PC-9 (cell line): ENCODE measurements at regions of chr2 and their contacts with region 1.

Region 1: GRCh38 chr2:215619022-215619958 is 183.4 kb upstream of the FN1 start:
- DNase-seq: peak; percentile 74 to 95
- H3K4me3 ChIP-seq: peak overlapping the region; percentile 31; the same call in 1 of the 2 replicates
- H3K27ac ChIP-seq: peak overlapping the region; percentile 59
- H3K4me1 ChIP-seq: peaks cover 37% of the 10 kb centered on the region
- H3K27me3 ChIP-seq: no peaks in the 10 kb centered on the region
- CTCF ChIP-seq: no peak

Region 2: GRCh38 chr2:214244847-214245246 is 1374.4 kb before region 1 on chr2:
- CTCF ChIA-PET with region 1: no interaction called
- POLR2A ChIA-PET with region 1: no interaction called
- intact Hi-C with region 1: no loop called
- DNase-seq: no peak
- H3K4me3 ChIP-seq: no peak overlapping the region
- H3K27ac ChIP-seq: no peak overlapping the region
- H3K4me1 ChIP-seq: no peaks in the 10 kb centered on the region
- H3K27me3 ChIP-seq: no peaks in the 10 kb centered on the region
- CTCF ChIP-seq: no peak

Region 3: DNA sequence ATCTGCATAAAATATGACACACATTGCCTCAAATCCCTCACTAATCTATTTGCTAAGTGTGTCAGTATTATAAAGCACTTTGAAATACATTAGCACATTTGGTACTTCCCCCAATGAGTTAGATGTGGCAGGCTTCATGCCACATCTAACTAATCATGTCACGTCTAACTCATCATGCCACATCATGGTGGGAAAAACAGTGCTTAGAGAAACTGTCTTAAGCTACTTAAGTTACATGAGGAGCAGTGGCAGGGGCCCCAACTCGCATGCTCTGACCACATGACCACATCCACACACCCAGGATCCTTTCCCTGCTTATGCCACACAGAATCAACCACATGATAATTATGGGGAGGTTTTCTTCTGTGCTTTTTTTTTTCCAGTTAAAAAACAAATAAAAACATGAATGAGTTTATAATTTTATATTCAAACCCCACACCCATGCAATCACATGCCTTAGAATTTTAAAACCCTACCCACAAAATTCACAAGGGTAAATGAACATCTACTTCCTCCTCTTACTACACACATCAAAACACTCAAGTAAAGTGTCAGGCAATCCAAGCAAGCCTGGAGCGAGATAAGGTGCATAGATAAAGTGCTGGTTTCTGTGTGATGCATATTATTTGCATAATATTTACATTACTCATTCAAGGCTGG is 482.5 kb before region 1 on chr2:
- CTCF ChIA-PET with region 1: no interaction called
- POLR2A ChIA-PET with region 1: no interaction called
- intact Hi-C with region 1: no loop called
- DNase-seq: peak in 1 of 2 experiments; percentile 88
- H3K4me3 ChIP-seq: peak overlapping the region; percentile 2; the same call in 1 of the 2 replicates
- H3K27ac ChIP-seq: peak overlapping the region; percentile 81
- H3K4me1 ChIP-seq: peaks cover 30% of the 10 kb centered on the region
- H3K27me3 ChIP-seq: no peaks in the 10 kb centered on the region
- CTCF ChIP-seq: no peak

Region 4: GRCh38 chr2:215435809-215436704 is 183.2 kb before region 1 on chr2 and contains the start of gene FN1:
- CTCF ChIA-PET with region 1: no interaction called
- POLR2A ChIA-PET with region 1: no interaction called
- intact Hi-C with region 1: loop called (anchors 1 kb)
- DNase-seq: peak in 1 of 2 experiments; percentile 74
- H3K4me3 ChIP-seq: peak within 1 kb of the TSS; percentile 70
- H3K27ac ChIP-seq: no peak within 1 kb of the TSS
- H3K4me1 ChIP-seq: peaks cover 15% of the 10 kb centered on the region
- H3K27me3 ChIP-seq: no peaks in the 10 kb centered on the region
- CTCF ChIP-seq: no peak
- total RNA-seq, gene FN1: 39.4 and 42.5 TPM in 2 replicates

Region 5: DNA sequence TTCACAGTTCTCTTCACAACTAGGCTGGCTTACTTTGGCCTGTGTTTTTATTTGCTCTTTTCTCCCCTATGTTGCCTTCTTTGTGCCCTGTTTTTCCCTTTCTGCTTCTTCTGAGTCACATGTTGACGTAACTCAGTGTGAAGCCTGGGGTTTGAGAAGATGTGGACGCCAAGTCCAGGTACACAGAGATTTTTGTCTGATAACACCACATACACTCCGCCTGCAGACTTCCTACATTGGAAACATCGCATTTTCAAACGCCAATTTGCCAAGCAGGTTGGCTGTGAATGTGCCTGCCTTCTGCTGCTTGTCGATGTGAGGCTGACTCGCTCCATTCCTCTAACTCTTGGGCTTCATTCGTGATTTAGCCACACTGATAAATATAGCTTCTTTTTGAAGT is 120.9 kb before region 1 on chr2:
- CTCF ChIA-PET with region 1: no interaction called
- POLR2A ChIA-PET with region 1: interaction called, 6 read pairs
- intact Hi-C with region 1: loop called (anchors 2 kb)
- DNase-seq: peak in 1 of 2 experiments; percentile 38
- H3K4me3 ChIP-seq: no peak overlapping the region
- H3K27ac ChIP-seq: no peak overlapping the region
- H3K4me1 ChIP-seq: no peaks in the 10 kb centered on the region
- H3K27me3 ChIP-seq: no peaks in the 10 kb centered on the region
- CTCF ChIP-seq: no peak

Region 6: GRCh38 chr2:215528555-215528954 is 90.7 kb before region 1 on chr2:
- CTCF ChIA-PET with region 1: no interaction called
- POLR2A ChIA-PET with region 1: no interaction called
- intact Hi-C with region 1: no loop called
- DNase-seq: no peak
- H3K4me3 ChIP-seq: no peak overlapping the region
- H3K27ac ChIP-seq: no peak overlapping the region
- H3K4me1 ChIP-seq: peaks cover 32% of the 10 kb centered on the region; the same call in 1 of the 2 replicates
- H3K27me3 ChIP-seq: no peaks in the 10 kb centered on the region
- CTCF ChIP-seq: no peak

Region 7: GRCh38 chr2:215828517-215829184 is 209.4 kb after region 1 on chr2:
- CTCF ChIA-PET with region 1: no interaction called
- POLR2A ChIA-PET with region 1: no interaction called
- intact Hi-C with region 1: loop called (anchors 1 kb)
- DNase-seq: peak; percentile 60 to 65
- H3K4me3 ChIP-seq: no peak overlapping the region
- H3K27ac ChIP-seq: no peak overlapping the region
- H3K4me1 ChIP-seq: peaks cover 50% of the 10 kb centered on the region
- H3K27me3 ChIP-seq: no peaks in the 10 kb centered on the region
- CTCF ChIP-seq: peak; percentile 85

Region 8: DNA sequence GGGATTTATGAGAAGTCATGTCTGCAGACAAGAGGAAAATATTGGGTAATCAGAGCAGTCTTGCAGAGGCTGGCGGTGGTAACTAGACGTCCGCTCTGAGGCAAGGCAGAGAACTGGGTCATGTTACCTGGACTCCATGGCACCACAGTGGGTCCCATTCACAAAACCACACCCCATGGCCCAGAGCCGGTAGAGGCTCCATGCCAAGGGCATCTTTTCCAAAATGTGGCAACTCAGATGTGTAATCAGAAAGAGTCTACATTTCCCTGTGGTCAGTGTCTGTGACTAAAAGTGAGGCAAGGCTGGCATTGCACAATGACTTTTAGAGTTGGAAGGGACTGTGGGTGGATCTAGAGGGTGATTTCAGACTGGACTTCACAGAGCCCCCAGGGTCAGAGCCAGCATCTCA is 280.9 kb after region 1 on chr2:
- CTCF ChIA-PET with region 1: no interaction called
- POLR2A ChIA-PET with region 1: no interaction called
- intact Hi-C with region 1: loop called (anchors 10 kb)
- DNase-seq: peak; percentile 29 to 74
- H3K4me3 ChIP-seq: no peak overlapping the region
- H3K27ac ChIP-seq: no peak overlapping the region
- H3K4me1 ChIP-seq: peaks cover 20% of the 10 kb centered on the region
- H3K27me3 ChIP-seq: no peaks in the 10 kb centered on the region
- CTCF ChIP-seq: no peak